Mammary epithelial cell (primary cell): ENCODE measurements at regions of chr21 and their contacts with region 1.

Region 1: DNA sequence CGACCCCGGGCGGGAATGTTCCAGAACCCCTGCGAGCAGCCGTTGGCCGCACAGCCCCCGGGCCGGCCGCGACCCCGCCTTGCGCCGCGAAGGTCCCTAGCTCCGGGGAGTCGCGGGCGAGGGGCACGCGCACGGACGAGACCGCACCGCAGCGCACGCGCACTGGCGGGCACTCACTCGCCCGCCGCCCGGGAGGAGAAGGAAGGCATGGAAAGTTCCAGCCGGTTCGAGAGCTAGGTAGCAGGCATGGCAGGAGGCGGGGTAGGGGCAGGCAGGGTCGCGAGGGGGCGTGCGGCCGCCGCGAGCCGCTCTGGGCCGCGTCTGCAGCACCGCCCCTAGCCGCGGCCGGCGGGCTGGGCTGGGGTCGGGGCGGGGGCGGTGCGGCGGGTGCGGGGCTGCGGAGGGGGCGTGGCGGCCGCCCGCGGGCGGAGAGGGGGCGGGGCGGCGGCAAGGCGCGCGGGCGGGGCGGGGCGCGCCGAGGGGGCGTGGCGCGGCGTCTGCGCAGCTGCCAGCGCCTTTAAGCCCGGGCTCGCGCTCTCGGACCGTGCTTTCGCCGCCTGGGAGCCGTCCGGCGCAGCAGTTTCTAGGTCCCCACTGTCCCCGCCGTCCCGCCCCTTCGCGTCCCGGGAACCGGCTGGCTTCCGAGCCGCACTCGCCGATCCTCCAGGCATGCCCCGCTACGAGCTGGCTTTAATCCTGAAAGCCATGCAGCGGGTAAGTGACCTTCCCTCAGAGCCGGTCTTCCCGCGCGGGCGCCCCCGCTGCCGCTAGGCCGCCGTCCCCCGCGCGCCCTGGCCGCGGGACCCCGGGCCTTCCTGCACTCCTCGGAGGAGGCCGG is at the starts of genes MRPS6 and SLC5A3:
- DNase-seq: peak; percentile 76
- H3K4me3 ChIP-seq: peak within 1 kb of the TSS; percentile 88 to 90 (median 88)
- H3K27ac ChIP-seq: peak within 1 kb of the TSS; percentile 75
- H3K4me1 ChIP-seq: peaks cover 21% of the 10 kb centered on the region
- H3K27me3 ChIP-seq: no peaks in the 10 kb centered on the region
- CTCF ChIP-seq: no peak
- total RNA-seq, gene MRPS6: 10.2 to 65.9 TPM
- total RNA-seq, gene SLC5A3: 10.8 to 17.5 TPM

Region 2: GRCh38 chr21:33947451-33948095 is 125.7 kb before region 1 on chr21:
- CTCF ChIA-PET with region 1: no interaction called
- dilution Hi-C with region 1: no loop called
- in situ Hi-C with region 1: no loop called
- intact Hi-C with region 1: loop called (anchors 5 kb)
- DNase-seq: peak; percentile 98
- H3K4me3 ChIP-seq: peak overlapping the region; percentile 30 to 39 (median 37)
- H3K27ac ChIP-seq: peak overlapping the region; percentile 93
- H3K4me1 ChIP-seq: peaks cover 25% of the 10 kb centered on the region
- H3K27me3 ChIP-seq: no peaks in the 10 kb centered on the region
- CTCF ChIP-seq: no peak

Region 3: GRCh38 chr21:34037009-34037795 is 36.0 kb before region 1 on chr21:
- CTCF ChIA-PET with region 1: interaction called, 4 read pairs
- dilution Hi-C with region 1: no loop called
- in situ Hi-C with region 1: no loop called
- intact Hi-C with region 1: loop called (anchors 2 kb)
- DNase-seq: peak; percentile 56
- H3K4me3 ChIP-seq: no peak overlapping the region
- H3K27ac ChIP-seq: peak overlapping the region; percentile 49
- H3K4me1 ChIP-seq: peaks cover 27% of the 10 kb centered on the region
- H3K27me3 ChIP-seq: no peaks in the 10 kb centered on the region
- CTCF ChIP-seq: no peak

Region 4: GRCh38 chr21:34202553-34203372 is 129.5 kb after region 1 on chr21:
- CTCF ChIA-PET with region 1: no interaction called
- dilution Hi-C with region 1: no loop called
- in situ Hi-C with region 1: no loop called
- intact Hi-C with region 1: loop called (anchors 10 kb)
- DNase-seq: no peak
- H3K4me3 ChIP-seq: no peak overlapping the region
- H3K27ac ChIP-seq: no peak overlapping the region
- H3K4me1 ChIP-seq: peaks cover 4% of the 10 kb centered on the region
- H3K27me3 ChIP-seq: no peaks in the 10 kb centered on the region
- CTCF ChIP-seq: no peak

Region 5: GRCh38 chr21:34243562-34243961 is 170.3 kb after region 1 on chr21:
- CTCF ChIA-PET with region 1: no interaction called
- dilution Hi-C with region 1: no loop called
- in situ Hi-C with region 1: no loop called
- intact Hi-C with region 1: loop called (anchors 10 kb)
- DNase-seq: peak; percentile 16
- H3K4me3 ChIP-seq: no peak overlapping the region
- H3K27ac ChIP-seq: no peak overlapping the region
- H3K4me1 ChIP-seq: no peaks in the 10 kb centered on the region
- H3K27me3 ChIP-seq: no peaks in the 10 kb centered on the region
- CTCF ChIP-seq: peak; percentile 55 to 74